HEK293 (cell line): ENCODE measurements at regions of chr2 and their contacts with region 1.

Region 1: GRCh38 chr2:43226558-43226954 is at the start of gene ZFP36L2:
- H3K4me3 ChIP-seq: peak within 1 kb of the TSS; percentile 85
- H3K27ac ChIP-seq: peak within 1 kb of the TSS; percentile 97
- H3K4me1 ChIP-seq: no peaks in the 10 kb centered on the region; the same call in 1 of the 2 replicates
- CTCF ChIP-seq: no peak

Region 2: DNA sequence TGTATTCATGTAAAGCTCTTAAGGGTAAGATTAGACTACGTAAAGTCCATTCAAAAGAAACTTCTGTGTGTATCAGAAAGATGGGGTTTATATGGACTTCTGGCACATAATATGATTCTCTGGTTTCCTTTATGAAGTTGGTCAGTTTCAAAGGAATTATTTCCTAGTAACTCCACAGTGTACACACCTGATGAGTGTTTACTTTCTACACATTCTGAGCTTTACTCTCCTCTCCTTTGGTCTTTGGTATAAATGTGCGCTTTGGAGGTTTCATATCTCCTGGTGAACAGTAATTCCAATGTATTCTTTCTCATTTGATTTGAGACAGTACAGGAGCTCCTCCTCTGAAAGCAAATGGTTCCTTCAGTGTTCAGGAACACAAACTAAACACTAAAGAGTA is 550.7 kb before region 1 on chr2:
- CTCF ChIA-PET with region 1: no interaction called
- POLR2A ChIA-PET with region 1: no interaction called
- H3K4me3 ChIP-seq: no peak overlapping the region
- H3K27ac ChIP-seq: no peak overlapping the region
- H3K4me1 ChIP-seq: no peaks in the 10 kb centered on the region
- CTCF ChIP-seq: no peak

Region 3: DNA sequence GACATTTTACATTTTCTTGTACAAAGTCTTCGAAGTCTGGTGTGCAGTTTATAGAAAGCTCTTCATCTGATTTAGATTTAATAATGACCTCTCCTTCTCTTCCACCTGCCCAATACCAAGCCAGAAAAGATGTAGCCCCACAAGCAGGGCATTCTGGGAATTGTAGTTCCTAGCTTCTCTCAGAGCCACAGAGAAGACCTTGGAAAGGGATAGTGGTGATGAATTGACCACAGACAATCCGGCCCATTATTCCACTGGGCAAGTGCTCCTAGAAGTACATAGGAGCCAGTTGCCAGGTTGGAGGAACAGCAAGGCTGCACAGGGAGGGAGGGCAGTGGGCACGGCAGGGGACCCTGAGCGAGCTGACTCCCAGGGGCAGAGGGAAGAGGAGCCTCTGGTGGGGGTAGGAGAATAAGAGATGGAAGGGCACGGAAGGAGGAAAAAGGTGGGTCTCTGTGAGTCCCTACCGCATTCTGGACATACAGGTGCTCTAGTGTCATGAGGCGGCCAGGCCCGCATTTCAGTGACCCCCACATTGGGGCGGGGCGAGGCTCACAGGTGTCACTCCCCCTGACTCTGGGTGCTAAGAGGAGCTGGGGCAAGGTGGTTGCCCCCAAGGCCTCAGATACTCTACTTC is 281.7 kb before region 1 on chr2:
- CTCF ChIA-PET with region 1: interaction called, 48 read pairs
- POLR2A ChIA-PET with region 1: interaction called, 6 read pairs
- H3K4me3 ChIP-seq: no peak overlapping the region
- H3K27ac ChIP-seq: no peak overlapping the region
- H3K4me1 ChIP-seq: no peaks in the 10 kb centered on the region
- CTCF ChIP-seq: no peak

Region 4: GRCh38 chr2:43041661-43042360 is 184.7 kb before region 1 on chr2:
- CTCF ChIA-PET with region 1: interaction called, 6 read pairs
- POLR2A ChIA-PET with region 1: interaction called, 12 read pairs
- H3K4me3 ChIP-seq: no peak overlapping the region
- H3K27ac ChIP-seq: no peak overlapping the region
- H3K4me1 ChIP-seq: 0 out of 2 replicates have a peak, but pooled peaks cover 3% of the 10 kb centered on the region
- CTCF ChIP-seq: no peak

Region 5: GRCh38 chr2:43178602-43179542 is 47.7 kb before region 1 on chr2:
- CTCF ChIA-PET with region 1: interaction called, 8 read pairs
- POLR2A ChIA-PET with region 1: interaction called, 14 read pairs
- H3K4me3 ChIP-seq: no peak overlapping the region
- H3K27ac ChIP-seq: peak overlapping the region; percentile 63
- H3K4me1 ChIP-seq: peaks cover 11% of the 10 kb centered on the region; the same call in 1 of the 2 replicates
- CTCF ChIP-seq: no peak

Region 6: DNA sequence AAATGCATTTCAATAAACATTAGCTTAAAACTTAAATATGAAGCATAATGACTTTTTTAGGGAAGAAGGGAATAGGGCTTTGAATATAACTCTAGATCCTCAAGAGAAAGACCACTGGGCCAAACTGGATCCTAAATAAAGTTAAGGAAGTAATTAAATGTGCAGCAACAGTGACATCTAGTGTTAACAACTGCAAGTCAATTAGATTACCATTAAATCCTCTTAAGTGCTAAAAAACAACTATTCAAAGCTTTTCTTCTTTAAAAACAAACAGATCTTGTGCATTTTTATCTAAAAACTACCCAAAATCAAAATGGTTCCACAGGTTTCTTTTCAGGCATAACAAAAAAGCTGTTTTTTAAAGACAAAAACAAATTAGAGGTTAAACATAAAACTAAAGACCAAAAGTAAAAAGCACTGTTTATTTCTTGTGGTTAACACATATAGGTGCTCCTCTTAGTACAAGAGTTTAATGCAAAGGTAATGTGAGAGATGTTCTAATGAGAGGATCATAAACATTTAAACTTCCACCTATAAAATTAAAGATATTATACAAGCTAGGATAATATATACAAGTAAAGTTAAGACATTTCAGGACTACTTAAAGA is 257.9 kb after region 1 on chr2:
- CTCF ChIA-PET with region 1: interaction called, 22 read pairs
- POLR2A ChIA-PET with region 1: no interaction called
- H3K4me3 ChIP-seq: no peak overlapping the region
- H3K27ac ChIP-seq: no peak overlapping the region
- H3K4me1 ChIP-seq: no peaks in the 10 kb centered on the region
- CTCF ChIP-seq: no peak; the same call in 1 of the 2 replicates